H1 (cell line): ENCODE measurements at regions of chr12 and their contacts with region 1.

Region 1: GRCh38 chr12:124512667-124513296 is 54.6 kb downstream of the NCOR2 start:
- DNase-seq: peak; percentile 73 to 79
- H3K4me3 ChIP-seq: peak overlapping the region in 3 of 4 experiments; percentile 5 to 37 (median 11); a peak in 2 of 8 replicates
- H3K27ac ChIP-seq: peak overlapping the region; percentile 96
- H3K4me1 ChIP-seq: peaks cover 19 to 63% (median 42%) of the 10 kb centered on the region in 4 experiments
- H3K27me3 ChIP-seq: no peaks in the 10 kb centered on the region
- CTCF ChIP-seq: no peak
- EP300 ChIP-seq: 0 out of 3 replicates have a peak, but pooled peaks of 1 of the 2 experiments have one; percentile 49
- POLR2A ChIP-seq: no peak
- RAD21 ChIP-seq: no peak

Region 2: DNA sequence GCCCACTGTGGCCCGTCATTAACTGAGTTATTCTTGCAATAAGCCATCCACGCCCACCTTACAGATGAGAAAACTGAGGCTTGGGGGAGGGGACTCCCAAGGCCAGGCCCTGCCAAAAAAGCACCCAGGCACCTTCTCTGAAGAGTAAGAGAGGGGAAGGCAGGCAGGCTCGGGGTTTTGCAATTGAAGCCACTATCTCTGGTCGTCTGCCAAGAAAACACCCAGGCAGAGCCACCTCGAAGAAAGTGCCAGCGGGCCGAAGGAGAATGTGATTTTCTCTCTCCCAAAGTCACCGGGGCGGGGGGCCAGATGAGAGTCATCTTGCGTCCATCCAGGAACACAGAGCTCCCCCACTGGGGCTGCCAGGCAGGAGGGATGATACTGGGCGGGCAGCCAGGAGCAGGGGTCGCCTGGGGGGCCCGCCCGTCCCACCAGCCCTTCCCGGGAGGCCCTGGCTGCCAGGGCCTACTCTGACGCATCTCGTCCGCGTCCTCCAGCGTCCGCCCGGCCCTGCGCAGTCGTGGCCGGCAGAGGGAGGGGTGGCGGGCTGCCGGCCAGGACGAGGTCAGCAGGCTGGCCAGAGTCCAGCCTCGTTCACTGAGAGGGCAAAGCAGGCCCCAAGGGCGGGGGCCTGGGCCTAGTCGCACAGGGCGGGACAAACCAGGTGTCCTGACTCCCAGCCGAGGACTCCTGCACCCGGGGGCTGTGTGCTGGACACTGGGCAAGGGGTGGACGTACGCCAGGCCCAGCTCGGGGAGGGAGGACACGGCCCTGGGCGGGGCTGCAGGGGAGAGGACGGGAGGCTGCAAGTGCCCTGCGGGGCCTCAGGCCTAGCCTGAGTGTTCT is 143.5 kb before region 1 on chr12:
- CTCF ChIA-PET with region 1: no interaction called
- POLR2A ChIA-PET with region 1: no interaction called
- DNase-seq: no peak
- H3K4me3 ChIP-seq: no peak overlapping the region
- H3K27ac ChIP-seq: no peak overlapping the region
- H3K4me1 ChIP-seq: no peaks in the 10 kb centered on the region
- H3K27me3 ChIP-seq: no peaks in the 10 kb centered on the region
- CTCF ChIP-seq: no peak
- EP300 ChIP-seq: no peak
- POLR2A ChIP-seq: no peak
- RAD21 ChIP-seq: no peak

Region 3: DNA sequence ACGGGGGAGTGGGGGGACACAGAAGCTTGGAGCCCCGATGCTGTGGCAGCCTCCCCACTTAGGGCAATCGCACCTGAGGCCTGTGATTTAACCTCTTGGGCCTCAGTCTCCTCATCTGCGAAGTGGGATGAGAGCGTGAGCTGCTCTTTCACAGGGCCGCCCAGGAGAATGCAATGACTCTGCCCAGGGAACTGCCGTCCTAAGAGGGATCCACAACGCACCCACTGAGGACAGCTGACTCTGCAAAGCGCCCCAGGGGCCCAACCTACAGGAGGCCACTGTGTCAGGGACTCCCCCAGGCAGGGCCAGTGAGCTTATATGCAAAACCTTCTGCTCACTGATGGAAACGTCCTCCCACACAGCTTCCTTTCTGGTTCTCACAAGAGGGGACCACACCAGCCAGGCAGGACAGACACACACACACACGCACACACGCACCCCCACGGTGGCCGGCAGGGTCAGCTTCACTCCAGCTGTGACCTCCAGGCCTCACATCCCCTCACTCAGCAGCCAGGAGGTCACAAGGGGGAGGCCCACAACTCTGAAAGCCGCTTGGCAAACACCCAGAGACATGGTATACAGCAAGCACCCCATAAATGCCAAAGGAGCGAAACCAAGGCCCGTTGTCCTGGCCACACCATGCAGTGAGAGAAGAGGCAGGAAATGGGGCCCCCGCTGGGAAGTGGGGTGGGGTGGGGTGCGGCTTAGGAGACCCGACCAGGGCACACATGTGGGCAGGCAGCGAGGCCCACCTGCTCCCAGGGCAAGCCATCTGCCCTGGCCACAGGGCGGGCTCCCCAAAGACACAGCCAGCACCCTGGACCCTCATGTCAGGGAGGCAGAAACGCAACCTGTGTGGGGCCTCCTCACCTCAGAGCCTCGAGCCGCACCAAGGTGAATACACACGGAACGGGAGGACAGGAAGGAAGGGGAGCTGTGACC is 18.7 kb before region 1 on chr12:
- CTCF ChIA-PET with region 1: interaction called, 25 read pairs
- POLR2A ChIA-PET with region 1: interaction called, 3 read pairs
- DNase-seq: no peak
- H3K4me3 ChIP-seq: no peak overlapping the region
- H3K27ac ChIP-seq: no peak overlapping the region
- H3K4me1 ChIP-seq: peaks cover 0 to 11% (median 4%) of the 10 kb centered on the region in 4 experiments; a peak in 4 of 7 replicates
- H3K27me3 ChIP-seq: no peaks in the 10 kb centered on the region
- CTCF ChIP-seq: no peak
- EP300 ChIP-seq: no peak
- POLR2A ChIP-seq: no peak
- RAD21 ChIP-seq: no peak

Region 4: DNA sequence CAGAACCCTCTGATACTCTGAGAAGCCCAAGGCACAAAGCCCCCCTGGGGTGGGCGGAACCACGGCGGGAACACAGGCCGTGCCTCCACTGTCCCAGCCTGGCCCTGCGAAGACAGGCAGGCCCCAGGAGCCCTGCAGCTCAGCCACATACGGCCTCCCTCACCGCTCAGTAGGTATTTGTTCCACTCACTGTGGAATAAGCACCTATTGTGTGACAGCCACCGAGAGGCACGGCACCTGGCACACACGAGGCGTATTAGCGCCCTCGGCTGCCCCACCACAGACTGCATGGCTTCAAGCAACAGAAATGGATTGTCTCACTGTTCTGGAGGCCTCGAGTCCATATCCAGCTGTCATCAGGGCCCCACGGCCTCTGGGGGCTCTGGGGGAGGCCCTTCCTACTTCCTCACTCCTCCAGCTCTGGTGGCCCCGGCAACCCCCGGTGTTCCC is 11.6 kb before region 1 on chr12:
- CTCF ChIA-PET with region 1: interaction called, 20 read pairs
- POLR2A ChIA-PET with region 1: interaction called, 32 read pairs
- DNase-seq: peak in 1 of 2 experiments; percentile 61
- H3K4me3 ChIP-seq: no peak overlapping the region
- H3K27ac ChIP-seq: peak overlapping the region; percentile 73
- H3K4me1 ChIP-seq: peaks cover 7 to 67% (median 46%) of the 10 kb centered on the region in 4 experiments
- H3K27me3 ChIP-seq: no peaks in the 10 kb centered on the region
- CTCF ChIP-seq: no peak
- EP300 ChIP-seq: no peak
- POLR2A ChIP-seq: no peak
- RAD21 ChIP-seq: no peak